ENCODE measurements at regions of chr20 and their contacts with region 1.

Region 1: GRCh38 chr20:10090588-10091166 is 55.9 kb downstream of the ANKEF1 start:
- DNase-seq: no peak

Region 2: DNA sequence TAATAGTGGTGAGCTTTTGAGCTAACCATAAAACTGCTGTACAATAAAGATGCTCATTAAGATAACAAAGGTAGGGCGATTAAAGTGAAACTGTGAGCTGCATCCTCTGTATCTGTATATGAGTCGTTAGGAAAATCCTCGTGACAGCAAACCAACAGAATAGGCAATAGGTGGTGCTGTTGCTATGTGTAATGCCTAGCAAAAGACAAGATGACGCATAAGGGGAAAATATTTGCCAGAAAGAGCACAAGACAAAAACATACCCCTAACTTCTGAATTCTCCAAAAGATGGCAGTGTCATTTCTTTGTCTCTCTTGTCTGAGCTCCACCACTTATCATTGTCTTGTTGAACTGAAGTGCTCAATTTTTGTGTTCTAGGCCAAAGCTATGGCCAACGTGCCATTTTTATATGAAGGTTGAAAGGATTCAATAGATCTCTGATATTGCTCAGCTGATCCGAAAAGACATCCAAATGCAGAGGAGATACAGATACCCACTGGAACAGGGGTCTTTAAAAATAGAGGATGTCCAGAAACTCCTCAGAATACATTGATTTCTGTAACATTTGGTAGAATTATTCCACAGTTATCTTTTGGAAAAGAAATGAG is 112.2 kb before region 1 on chr20:
- intact Hi-C with region 1: loop called (anchors 1 kb)
- DNase-seq: no peak

Region 3: GRCh38 chr20:10434467-10434831 is 343.8 kb after region 1 on chr20:
- intact Hi-C with region 1: loop called (anchors 5 kb)
- DNase-seq: peak; percentile 94

Region 4: DNA sequence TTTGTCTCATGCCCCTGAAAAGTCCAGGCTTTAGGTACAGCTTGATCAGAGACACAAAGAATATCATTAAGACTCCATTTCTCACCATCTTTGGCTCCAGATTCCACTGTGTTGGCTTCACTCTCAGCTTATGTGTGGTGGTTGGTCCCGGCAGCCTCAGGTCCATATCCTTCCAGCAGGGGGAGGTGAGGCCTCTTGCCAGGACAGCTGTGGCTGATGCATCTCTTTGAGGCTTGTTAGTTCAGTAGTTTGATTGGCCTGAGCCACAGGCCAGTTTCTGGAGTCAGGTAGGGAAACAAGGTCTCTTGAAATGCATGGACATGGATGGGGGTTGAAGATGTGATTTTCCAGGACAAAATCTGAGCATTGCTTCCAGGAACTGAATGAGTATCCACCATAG is 520.7 kb after region 1 on chr20:
- intact Hi-C with region 1: no loop called
- DNase-seq: no peak